ENCODE measurements at regions of chr1 and their contacts with region 1.

Region 1: GRCh38 chr1:8348777-8349491 is 31.0 kb downstream of the SLC45A1 start:
- DNase-seq: peak in 1 of 2 experiments; percentile 59
- H3K4me3 ChIP-seq: no peak overlapping the region
- H3K27ac ChIP-seq: no peak overlapping the region
- H3K4me1 ChIP-seq: peaks cover 7% of the 10 kb centered on the region
- H3K27me3 ChIP-seq: no peaks in the 10 kb centered on the region
- CTCF ChIP-seq: peak; percentile 89

Region 2: DNA sequence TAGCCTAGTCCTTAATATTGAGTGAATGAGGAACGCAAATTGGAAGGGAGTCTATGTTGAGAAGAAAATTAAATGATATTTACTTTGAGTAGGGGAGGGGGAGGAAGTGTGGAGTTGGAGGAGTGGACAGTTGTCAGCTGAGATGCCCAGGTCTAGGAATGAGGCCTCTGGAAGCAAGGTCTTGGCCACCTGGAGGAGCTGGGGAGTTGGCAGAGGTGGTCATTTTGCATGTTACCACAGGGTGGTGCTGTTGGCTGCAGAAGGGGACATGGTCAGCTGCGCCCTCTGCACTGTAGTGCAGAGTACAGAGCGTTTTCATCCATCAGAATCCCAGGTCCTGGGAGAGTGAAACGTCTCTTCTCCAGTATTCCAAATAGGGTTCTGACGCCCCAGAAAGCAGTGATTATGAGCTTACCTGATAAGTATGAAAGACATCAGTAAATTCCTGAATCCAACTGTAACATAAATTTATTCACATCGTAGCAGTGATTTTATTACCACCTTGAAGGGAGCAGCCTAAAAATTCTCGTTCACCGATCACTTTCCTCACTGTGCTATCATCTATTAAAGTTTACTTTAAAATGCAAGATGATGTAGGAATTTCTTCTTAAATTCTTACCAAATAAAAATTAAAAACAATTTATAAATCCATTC is 373.6 kb before region 1 on chr1:
- CTCF ChIA-PET with region 1: interaction called, 8 read pairs
- POLR2A ChIA-PET with region 1: interaction called, 5 read pairs
- intact Hi-C with region 1: loop called (anchors 1 kb)
- DNase-seq: peak; percentile 56 to 84
- H3K4me3 ChIP-seq: no peak overlapping the region
- H3K27ac ChIP-seq: no peak overlapping the region
- H3K4me1 ChIP-seq: no peaks in the 10 kb centered on the region; the same call in 1 of the 2 replicates
- H3K27me3 ChIP-seq: no peaks in the 10 kb centered on the region
- CTCF ChIP-seq: peak; percentile 84

Region 3: DNA sequence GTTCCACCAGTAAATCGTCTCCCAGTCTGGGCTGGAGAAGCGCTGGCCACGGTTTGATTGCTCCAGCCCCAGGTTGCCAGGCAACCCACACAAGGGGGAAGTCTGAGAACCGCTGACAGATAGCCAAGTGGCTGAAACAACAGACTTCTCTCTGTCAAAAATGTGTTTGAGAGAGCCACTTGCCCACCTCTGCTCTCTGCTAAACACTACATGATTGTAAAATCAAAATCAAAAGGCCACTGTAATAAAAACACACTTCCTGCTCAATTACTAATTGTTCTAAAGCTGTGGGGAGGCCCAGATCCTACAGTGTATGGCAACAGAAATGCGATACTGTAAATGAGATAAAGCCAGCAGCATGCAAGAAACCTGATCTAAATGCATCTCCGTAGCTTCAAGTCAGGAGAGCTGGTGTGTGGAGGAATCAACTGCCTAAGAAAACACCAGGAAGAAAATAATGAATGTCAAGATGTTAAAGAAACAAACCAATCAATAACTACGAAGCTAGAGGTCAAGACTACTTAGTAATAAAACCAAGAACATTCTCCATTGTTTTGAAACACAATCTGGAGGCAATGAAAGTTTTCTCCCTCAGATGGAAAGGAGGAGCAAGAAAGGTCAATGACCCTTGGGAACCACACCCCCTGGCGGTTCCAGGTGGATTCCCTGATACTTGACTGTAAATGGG is 90.2 kb after region 1 on chr1:
- CTCF ChIA-PET with region 1: no interaction called
- POLR2A ChIA-PET with region 1: no interaction called
- intact Hi-C with region 1: no loop called
- DNase-seq: peak in 1 of 2 experiments; percentile 21
- H3K4me3 ChIP-seq: no peak overlapping the region
- H3K27ac ChIP-seq: no peak overlapping the region
- H3K4me1 ChIP-seq: no peaks in the 10 kb centered on the region
- H3K27me3 ChIP-seq: no peaks in the 10 kb centered on the region
- CTCF ChIP-seq: no peak

Measured in PC-9 (cell line).